Natural killer cell (primary cell): ENCODE measurements at regions of chr5 and their contacts with region 1.

Region 1: GRCh38 chr5:148730943-148731861 is 76.9 kb upstream of the HTR4 start:
- DNase-seq: peak; percentile 29 to 86
- ATAC-seq: peak; percentile 96 to 99 (median 98)
- H3K4me3 ChIP-seq: peak overlapping the region; percentile 0
- H3K4me3 Mint-ChIP-seq: peak overlapping the region; percentile 54
- H3K27ac ChIP-seq: no peak overlapping the region
- H3K27ac Mint-ChIP-seq: no peak overlapping the region
- H3K4me1 ChIP-seq: peaks cover 4% of the 10 kb centered on the region
- H3K4me1 Mint-ChIP-seq: peaks cover 9 to 21% of the 10 kb centered on the region in 2 donors
- H3K27me3 ChIP-seq: no peaks in the 10 kb centered on the region
- H3K27me3 Mint-ChIP-seq: peaks cover 3 to 25% of the 10 kb centered on the region in 2 donors
- CTCF ChIP-seq: peak; percentile 94

Region 2: GRCh38 chr5:147949711-147950573 is 781.3 kb before region 1 on chr5:
- intact Hi-C with region 1: loop called (anchors 5 kb)
- DNase-seq: peak in 1 of 2 donors; percentile 16
- ATAC-seq: no peak
- H3K4me3 ChIP-seq: no peak overlapping the region
- H3K4me3 Mint-ChIP-seq: no peak overlapping the region
- H3K27ac ChIP-seq: no peak overlapping the region
- H3K27ac Mint-ChIP-seq: no peak overlapping the region
- H3K4me1 ChIP-seq: no peaks in the 10 kb centered on the region
- H3K4me1 Mint-ChIP-seq: no peaks in the 10 kb centered on the region
- H3K27me3 ChIP-seq: no peaks in the 10 kb centered on the region
- H3K27me3 Mint-ChIP-seq: no peaks in the 10 kb centered on the region
- CTCF ChIP-seq: peak; percentile 33

Region 3: GRCh38 chr5:148443998-148444397 is 287.2 kb before region 1 on chr5:
- intact Hi-C with region 1: loop called (anchors 1 kb)
- DNase-seq: peak in 1 of 2 donors; percentile 70
- ATAC-seq: peak; percentile 79 to 85 (median 83)
- H3K4me3 ChIP-seq: no peak overlapping the region
- H3K4me3 Mint-ChIP-seq: no peak overlapping the region
- H3K27ac ChIP-seq: no peak overlapping the region
- H3K27ac Mint-ChIP-seq: peak overlapping the region in 1 of 2 donors; percentile 57
- H3K4me1 ChIP-seq: no peaks in the 10 kb centered on the region
- H3K4me1 Mint-ChIP-seq: peaks cover 0 to 5% of the 10 kb centered on the region in 2 donors
- H3K27me3 ChIP-seq: no peaks in the 10 kb centered on the region
- H3K27me3 Mint-ChIP-seq: no peaks in the 10 kb centered on the region
- CTCF ChIP-seq: peak; percentile 85

Region 4: DNA sequence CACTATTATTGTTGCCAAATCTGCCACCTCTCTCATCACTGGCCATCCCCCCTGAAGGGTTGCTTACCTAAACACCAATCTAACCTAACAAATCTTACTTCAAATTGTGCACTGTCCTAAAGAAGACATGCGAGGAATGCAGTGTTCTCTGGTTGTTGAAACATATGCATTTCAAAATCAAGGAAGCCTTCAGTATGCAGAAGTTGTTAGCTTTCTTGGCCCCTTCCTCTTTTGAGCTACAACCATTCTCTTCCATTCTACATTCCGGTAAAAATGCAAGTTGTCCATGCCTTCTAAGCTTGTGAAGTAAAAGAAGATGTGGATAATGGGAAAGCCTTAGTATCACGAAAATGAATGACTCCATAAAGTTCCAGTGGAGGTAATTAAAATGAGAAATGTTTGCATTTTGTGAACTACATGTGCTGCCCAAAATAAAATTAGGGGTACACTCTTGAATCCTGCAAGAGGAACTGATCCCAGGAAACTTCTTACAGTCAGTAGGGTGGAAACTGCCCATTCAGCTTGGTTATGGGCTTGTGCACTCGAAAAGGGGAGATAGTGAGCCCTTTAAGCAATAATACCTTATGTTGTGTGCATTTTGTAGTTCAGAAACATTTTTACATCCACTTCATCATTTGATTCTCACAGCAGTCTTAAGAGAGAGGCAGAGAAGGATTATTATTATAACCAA is 17.6 kb after region 1 on chr5:
- intact Hi-C with region 1: no loop called
- DNase-seq: no peak
- ATAC-seq: no peak
- H3K4me3 ChIP-seq: no peak overlapping the region
- H3K4me3 Mint-ChIP-seq: no peak overlapping the region
- H3K27ac ChIP-seq: no peak overlapping the region
- H3K27ac Mint-ChIP-seq: no peak overlapping the region
- H3K4me1 ChIP-seq: no peaks in the 10 kb centered on the region
- H3K4me1 Mint-ChIP-seq: peaks cover 5% of the 10 kb centered on the region in 2 donors
- H3K27me3 ChIP-seq: no peaks in the 10 kb centered on the region
- H3K27me3 Mint-ChIP-seq: peaks cover 0 to 5% of the 10 kb centered on the region in 2 donors
- CTCF ChIP-seq: no peak

Region 5: GRCh38 chr5:149035372-149035790 is 304.2 kb after region 1 on chr5:
- intact Hi-C with region 1: loop called (anchors 1 kb)
- DNase-seq: peak; percentile 61 to 80
- ATAC-seq: peak; percentile 79 to 89 (median 87)
- H3K4me3 ChIP-seq: no peak overlapping the region
- H3K4me3 Mint-ChIP-seq: no peak overlapping the region
- H3K27ac ChIP-seq: no peak overlapping the region
- H3K27ac Mint-ChIP-seq: no peak overlapping the region
- H3K4me1 ChIP-seq: peaks cover 12% of the 10 kb centered on the region
- H3K4me1 Mint-ChIP-seq: peaks cover 36 to 49% of the 10 kb centered on the region in 2 donors
- H3K27me3 ChIP-seq: no peaks in the 10 kb centered on the region
- H3K27me3 Mint-ChIP-seq: no peaks in the 10 kb centered on the region
- CTCF ChIP-seq: peak; percentile 84